ENCODE measurements at regions of chr2 and their contacts with region 1.

Region 1: GRCh38 chr2:235384624-235385023 is 109.2 kb upstream of the AGAP1 start:
- DNase-seq: peak; percentile 35 to 91 (median 86)
- H3K4me3 ChIP-seq: peak overlapping the region in 32 of 59 donors; percentile 2 to 48 (median 22)
- H3K27ac ChIP-seq: peak overlapping the region in 58 of 59 donors; percentile 5 to 92 (median 84)
- H3K27me3 ChIP-seq: peaks cover 0 to 8% (median 0%) of the 10 kb centered on the region in 45 donors
- CTCF ChIP-seq: peak in 17 of 56 donors; percentile 10 to 49 (median 20)

Region 2: DNA sequence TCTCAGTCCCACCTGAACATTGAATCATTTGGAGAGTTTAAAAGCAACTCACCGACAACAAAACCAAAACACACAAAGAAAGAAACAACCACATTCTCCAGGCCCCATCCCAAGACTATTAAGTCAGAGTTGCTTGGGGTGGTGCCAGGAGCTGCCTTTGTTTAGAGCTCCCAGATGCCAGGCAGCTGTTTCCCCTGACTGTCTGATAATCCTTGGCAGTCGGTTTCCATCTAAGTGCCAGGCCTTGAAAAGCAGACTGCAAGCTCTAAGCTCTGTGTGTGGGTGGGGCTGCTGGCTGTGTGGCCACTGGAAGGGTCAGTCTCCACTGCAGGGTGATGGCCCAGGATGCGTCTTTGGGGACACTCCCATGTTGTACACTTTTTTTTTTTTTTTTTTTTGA is 146.1 kb before region 1 on chr2:
- intact Hi-C with region 1: loop called in 1 of 2 experiments (anchors 5 kb)
- DNase-seq: peak in 9 of 10 donors; percentile 32 to 74 (median 60)
- H3K4me3 ChIP-seq: no peak overlapping the region
- H3K27ac ChIP-seq: no peak overlapping the region
- H3K27me3 ChIP-seq: peaks cover 0 to 3% (median 0%) of the 10 kb centered on the region in 45 donors
- CTCF ChIP-seq: no peak

Region 3: DNA sequence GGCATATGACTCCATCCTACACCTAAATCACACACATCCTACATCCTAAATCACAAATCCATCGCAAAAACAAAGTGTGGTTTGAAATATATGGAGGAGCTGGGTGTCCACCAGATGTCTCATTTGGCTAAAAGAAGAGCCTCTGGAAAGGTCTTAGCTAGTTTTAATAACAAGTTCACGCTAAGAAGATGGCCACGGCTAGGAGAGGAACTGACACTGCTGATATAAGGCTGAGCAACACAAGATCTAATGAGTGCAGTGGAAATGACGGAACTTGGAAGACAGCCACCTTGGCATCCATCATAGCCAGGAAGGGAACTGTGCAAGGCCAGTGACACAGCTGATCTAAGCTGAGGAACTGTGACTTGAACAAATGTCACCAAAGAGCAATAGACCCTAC is 49.2 kb after region 1 on chr2:
- intact Hi-C with region 1: loop called in 1 of 2 experiments (anchors 5 kb)
- DNase-seq: peak in 7 of 10 donors; percentile 44 to 83 (median 61)
- H3K4me3 ChIP-seq: peak overlapping the region in 26 of 59 donors; percentile 0 to 55 (median 28)
- H3K27ac ChIP-seq: peak overlapping the region in 44 of 59 donors; percentile 0 to 77 (median 36)
- H3K27me3 ChIP-seq: no peaks in the 10 kb centered on the region
- CTCF ChIP-seq: peak in 52 of 56 donors; percentile 9 to 72 (median 41)

Region 4: GRCh38 chr2:235577404-235578330 is 193.0 kb after region 1 on chr2:
- intact Hi-C with region 1: loop called in 1 of 2 experiments (anchors 10 kb)
- DNase-seq: peak; percentile 12 to 85 (median 76)
- H3K4me3 ChIP-seq: peak overlapping the region in 56 of 59 donors; percentile 1 to 62 (median 38)
- H3K27ac ChIP-seq: peak overlapping the region; percentile 23 to 99 (median 95)
- H3K27me3 ChIP-seq: no peaks in the 10 kb centered on the region
- CTCF ChIP-seq: peak in 7 of 56 donors; percentile 8 to 31 (median 11)

Measured in dorsolateral prefrontal cortex (tissue), 120 donors.